ENCODE measurements at regions of chr19 and their contacts with region 1.

Region 1: DNA sequence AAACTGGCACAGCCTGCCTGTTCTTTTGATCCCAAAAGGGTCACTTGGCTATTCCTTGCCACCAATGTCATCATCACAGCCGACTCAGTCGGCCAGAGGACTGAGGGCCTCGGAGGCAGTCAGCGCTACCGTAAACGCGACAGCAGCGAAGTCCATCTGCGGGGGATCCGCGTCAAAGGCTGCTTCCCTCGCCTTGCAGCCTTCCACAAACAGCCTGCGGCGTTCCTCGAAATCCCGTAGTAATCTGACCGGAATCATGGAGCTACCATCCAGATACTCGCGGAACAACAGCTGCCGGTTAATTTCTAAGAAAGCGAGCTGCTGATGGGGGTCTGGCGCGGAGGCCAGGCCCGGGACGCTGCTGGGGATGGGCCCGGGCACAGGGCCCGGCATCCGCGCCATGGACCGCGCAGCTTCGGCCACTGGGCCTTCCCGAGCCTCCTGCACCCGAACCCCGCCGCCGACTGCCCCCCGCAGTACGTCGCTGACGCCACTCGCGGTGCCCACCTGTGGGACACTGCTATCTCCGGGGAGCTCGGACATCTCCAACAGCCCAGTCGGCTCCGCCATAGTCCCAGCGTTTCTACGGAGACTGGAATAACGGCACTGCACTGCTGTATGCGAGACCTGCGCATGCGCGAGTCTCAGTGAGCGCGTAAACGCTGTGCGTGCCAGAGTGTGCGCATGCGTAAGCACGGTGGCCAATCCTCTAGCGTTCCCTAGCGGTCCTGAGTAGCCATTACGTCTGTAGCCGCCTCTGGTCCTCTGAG is at the start of gene EID2B:
- DNase-seq: peak; percentile 97 to 99 (median 98)
- ATAC-seq: peak; percentile 98 to 99
- H3K4me3 ChIP-seq: peak within 1 kb of the TSS; percentile 56
- H3K27ac ChIP-seq: peak within 1 kb of the TSS; percentile 71
- H3K4me1 ChIP-seq: no peaks in the 10 kb centered on the region
- H3K27me3 ChIP-seq: no peaks in the 10 kb centered on the region
- total RNA-seq, gene EID2B: 2.3 to 4.3 (median 3.3) TPM

Region 2: DNA sequence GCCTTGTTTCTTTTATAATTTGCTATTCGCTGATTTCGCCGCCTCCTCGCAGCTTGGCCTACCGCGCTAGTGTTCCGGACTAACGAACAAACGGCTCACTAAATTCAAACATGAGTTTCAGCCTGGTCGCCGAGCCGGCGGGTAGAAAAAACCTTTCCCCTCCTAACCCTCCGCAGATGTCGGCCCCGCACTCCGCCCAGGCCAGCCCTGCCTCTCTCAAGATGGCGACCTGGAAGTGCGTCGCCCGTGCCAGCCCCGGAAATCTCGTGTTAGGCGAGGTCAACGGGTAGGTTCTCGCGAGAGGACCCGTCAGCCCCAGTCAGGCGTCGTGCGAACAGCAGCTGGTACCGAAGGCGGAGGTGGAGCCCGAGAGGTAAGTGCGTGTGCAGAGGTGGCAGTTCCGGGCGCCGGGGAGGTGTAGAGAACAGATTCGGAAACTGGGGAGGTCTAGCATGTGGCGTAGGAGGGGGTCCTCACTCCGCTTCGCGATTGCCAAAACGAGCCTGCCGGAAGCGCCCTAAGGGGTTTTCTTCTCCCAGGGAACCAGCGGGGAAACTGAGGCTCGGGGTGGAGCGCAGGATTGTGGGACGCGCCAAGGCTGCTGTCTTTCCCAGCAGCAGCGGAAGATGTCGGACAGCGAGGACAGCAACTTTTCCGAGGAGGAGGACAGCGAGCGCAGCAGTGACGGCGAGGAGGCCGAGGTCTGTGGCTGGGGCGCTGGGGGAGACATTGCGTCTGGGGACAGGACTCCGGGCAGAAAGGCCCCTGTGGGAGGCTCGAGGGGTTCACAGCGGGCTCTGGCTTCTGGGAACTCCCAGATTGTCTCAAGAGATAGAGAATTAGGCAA is 86.9 kb before region 1 on chr19 and contains the start of gene SUPT5H:
- intact Hi-C with region 1: loop called in 2 of 4 experiments (anchors 10 kb)
- DNase-seq: peak; percentile 97 to 99 (median 98)
- ATAC-seq: peak; percentile 98
- H3K4me3 ChIP-seq: peak within 1 kb of the TSS; percentile 91
- H3K27ac ChIP-seq: peak within 1 kb of the TSS; percentile 96
- H3K4me1 ChIP-seq: peaks cover 6% of the 10 kb centered on the region
- H3K27me3 ChIP-seq: no peaks in the 10 kb centered on the region
- total RNA-seq, gene SUPT5H: 74.8 to 85.1 (median 80.1) TPM

Region 3: DNA sequence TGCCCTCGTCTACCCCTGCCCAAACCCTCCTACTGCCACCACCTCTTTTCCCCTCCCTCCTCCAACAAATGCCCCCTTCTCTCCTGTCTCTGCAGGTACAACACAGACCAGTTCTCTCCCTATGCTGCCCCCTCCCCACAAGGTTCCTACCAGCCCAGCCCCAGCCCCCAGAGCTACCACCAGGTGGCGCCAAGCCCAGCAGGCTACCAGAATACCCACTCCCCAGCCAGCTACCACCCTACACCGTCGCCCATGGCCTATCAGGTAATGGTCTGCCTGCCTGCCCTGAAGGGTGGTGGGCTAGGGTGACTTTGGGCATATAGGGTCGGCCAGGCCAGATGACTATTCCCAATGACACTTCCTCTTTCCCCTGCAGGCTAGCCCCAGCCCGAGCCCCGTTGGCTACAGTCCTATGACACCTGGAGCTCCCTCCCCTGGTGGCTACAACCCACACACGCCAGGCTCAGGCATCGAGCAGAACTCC is 58.2 kb before region 1 on chr19:
- intact Hi-C with region 1: loop called in 2 of 4 experiments (anchors 5 kb)
- DNase-seq: peak; percentile 56 to 86 (median 84)
- ATAC-seq: peak; percentile 60 to 65
- H3K4me3 ChIP-seq: no peak overlapping the region
- H3K27ac ChIP-seq: no peak overlapping the region
- H3K4me1 ChIP-seq: no peaks in the 10 kb centered on the region
- H3K27me3 ChIP-seq: no peaks in the 10 kb centered on the region

Region 4: GRCh38 chr19:39479916-39480315 is 52.5 kb before region 1 on chr19:
- intact Hi-C with region 1: loop called in 1 of 4 experiments (anchors 5 kb)
- DNase-seq: no peak
- ATAC-seq: no peak
- H3K4me3 ChIP-seq: peak overlapping the region; percentile 92
- H3K27ac ChIP-seq: peak overlapping the region; percentile 15
- H3K4me1 ChIP-seq: peaks cover 7% of the 10 kb centered on the region
- H3K27me3 ChIP-seq: no peaks in the 10 kb centered on the region